ENCODE measurements at regions of chr1 and their contacts with region 1.

Region 1: DNA sequence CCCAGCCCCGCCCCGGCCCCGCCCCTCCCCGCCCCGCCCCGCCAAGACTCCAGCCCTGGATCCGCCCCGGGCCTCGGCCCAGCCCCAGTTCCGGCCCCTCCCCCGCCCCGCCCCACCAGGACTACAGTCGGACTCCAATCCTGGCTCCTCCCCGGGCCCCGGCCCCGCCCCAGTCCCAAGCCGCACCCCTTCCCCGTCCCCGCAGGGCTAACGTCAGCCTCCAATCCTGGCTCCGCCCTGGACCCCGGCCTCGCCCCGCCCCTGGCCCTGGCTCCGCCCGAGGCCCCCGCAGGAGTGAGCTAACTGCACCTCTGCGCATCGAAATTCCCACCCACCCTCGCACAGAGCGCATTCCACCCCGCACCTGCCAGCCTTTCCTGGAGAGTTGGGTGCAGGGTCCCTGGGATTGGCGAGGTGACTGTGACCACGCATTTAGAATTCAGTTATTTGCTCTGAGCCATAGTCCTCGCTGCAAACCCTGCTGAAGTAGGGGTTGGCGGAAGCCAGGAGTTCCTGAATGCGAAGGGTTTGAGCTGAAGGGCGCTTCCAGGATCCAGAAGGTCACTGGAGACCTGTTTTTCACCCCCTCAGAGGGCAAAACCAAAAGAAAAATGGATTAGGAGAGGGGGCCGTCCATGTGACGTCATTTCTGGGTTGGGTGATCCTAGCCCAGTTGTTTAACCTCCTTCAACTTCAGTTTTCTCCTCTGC is 588 bp upstream of the IGSF8 start:
- DNase-seq: peak; percentile 99
- H3K4me3 ChIP-seq: peak overlapping the region; percentile 56 to 90 (median 76)
- H3K27ac ChIP-seq: peak overlapping the region; percentile 91 to 98 (median 95)
- H3K4me1 ChIP-seq: peaks cover 0 to 65% (median 58%) of the 10 kb centered on the region in 4 donors
- H3K27me3 ChIP-seq: no peaks in the 10 kb centered on the region
- CTCF ChIP-seq: no peak
- EP300 ChIP-seq: no peak
- POLR2A ChIP-seq: peak; percentile 67 to 83

Region 2: DNA sequence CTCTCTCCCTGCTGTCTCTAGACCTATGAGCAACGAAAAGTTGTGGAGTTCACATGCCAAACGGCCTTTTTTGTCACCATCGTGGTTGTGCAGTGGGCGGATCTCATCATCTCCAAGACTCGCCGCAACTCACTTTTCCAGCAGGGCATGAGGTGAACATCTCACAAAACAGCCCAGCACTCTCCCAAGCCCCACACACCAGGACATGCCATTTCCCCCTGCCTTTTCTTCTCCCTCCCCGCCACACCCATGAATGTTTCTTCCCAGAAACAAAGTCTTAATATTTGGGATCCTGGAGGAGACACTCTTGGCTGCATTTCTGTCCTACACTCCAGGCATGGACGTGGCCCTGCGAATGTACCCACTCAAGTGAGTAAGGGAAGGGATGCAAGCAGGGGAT is 82.7 kb after region 1 on chr1:
- intact Hi-C with region 1: no loop called
- DNase-seq: no peak
- H3K4me3 ChIP-seq: no peak overlapping the region
- H3K27ac ChIP-seq: no peak overlapping the region
- H3K4me1 ChIP-seq: no peaks in the 10 kb centered on the region
- H3K27me3 ChIP-seq: no peaks in the 10 kb centered on the region
- CTCF ChIP-seq: no peak
- EP300 ChIP-seq: no peak
- POLR2A ChIP-seq: no peak

Region 3: DNA sequence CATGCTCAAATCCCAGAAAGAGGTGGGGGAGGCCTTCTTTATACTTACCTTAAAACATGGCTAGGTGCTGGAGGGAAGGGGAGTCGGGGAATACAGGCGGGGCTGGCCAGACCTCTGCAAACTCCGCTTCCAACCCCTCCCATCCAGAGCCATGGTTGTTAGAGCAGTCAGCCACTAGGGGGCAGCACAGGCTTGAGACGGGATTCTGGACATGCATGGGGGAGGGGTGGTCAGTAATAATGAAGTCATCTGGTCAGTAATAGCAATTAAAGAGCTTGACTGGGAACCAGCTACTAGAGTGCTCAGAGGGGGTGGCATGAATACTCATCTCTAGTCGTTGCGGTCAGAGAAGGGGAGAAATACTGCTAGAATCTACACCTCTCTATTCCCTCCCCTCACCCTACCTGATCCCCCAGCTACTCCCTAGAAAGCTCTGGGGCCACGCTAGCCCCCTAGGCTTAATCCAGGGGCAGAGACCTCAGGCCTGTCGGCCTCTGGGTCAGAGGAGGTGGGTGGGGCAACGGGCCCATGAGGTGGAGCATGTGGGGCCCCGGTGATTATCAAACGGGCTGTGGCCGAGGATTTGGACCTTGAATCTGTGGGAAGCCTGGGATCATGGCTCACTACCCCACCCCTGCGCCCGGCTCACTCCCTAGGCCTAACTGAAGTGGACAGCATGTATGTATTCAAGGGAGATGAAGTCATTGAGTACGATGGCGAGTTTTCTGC is 94.2 kb after region 1 on chr1:
- intact Hi-C with region 1: loop called (anchors 1 kb)
- DNase-seq: peak; percentile 92
- H3K4me3 ChIP-seq: peak overlapping the region in 1 of 4 donors; percentile 14
- H3K27ac ChIP-seq: peak overlapping the region in 2 of 4 donors; percentile 25 to 68
- H3K4me1 ChIP-seq: peaks cover 0 to 37% (median 31%) of the 10 kb centered on the region in 4 donors
- H3K27me3 ChIP-seq: no peaks in the 10 kb centered on the region
- CTCF ChIP-seq: peak; percentile 95 to 99 (median 96)
- EP300 ChIP-seq: no peak
- POLR2A ChIP-seq: no peak

Region 4: GRCh38 chr1:160251687-160252526 is 152.9 kb after region 1 on chr1:
- intact Hi-C with region 1: loop called (anchors 1 kb)
- DNase-seq: peak; percentile 88
- H3K4me3 ChIP-seq: no peak overlapping the region
- H3K27ac ChIP-seq: peak overlapping the region; percentile 33 to 61 (median 47)
- H3K4me1 ChIP-seq: peaks cover 0 to 44% (median 34%) of the 10 kb centered on the region in 4 donors
- H3K27me3 ChIP-seq: no peaks in the 10 kb centered on the region
- CTCF ChIP-seq: peak; percentile 57 to 70 (median 62)
- EP300 ChIP-seq: no peak
- POLR2A ChIP-seq: no peak

Region 5: DNA sequence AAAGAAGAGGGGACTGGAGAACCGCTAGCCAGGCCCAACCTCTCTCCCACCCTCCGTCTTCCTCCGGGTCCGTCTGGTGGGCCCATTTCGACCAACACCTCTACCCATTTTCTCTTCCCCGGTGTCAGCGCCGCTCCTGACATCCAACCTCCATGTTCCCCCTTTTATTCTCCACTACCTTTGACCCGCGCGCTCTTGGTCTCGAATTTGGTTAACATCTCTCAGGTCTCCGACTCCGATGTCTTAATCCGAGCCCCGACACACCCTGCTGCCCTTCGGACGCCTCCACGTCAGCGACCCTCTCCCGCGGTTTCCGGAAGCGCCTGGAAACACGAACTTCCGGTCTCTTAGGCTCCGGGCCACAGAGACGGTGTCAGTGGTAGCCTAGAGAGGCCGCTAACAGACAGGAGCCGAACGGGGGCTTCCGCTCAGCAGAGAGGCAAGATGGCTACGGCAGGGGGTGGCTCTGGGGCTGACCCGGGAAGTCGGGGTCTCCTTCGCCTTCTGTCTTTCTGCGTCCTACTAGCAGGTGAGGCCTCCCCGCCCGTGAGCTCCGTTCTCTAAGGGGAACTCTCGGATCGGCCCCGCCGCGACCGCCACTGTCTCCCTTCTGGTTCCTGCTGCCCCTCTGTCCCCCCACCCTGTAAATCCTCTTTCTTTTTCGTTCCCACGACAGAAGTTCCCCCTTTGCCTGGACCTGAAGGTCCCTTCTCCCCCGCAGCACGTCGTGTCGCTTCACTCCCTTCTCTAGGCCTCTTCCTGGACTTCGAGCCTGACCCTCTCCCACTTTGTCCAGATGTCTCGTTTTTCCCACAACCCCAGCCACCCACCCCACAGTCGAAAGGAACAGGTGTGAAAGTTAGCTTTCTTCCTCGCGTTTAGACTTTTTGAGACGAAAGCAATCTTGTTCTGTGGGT is 244.2 kb after region 1 on chr1 and contains the starts of genes COPA and NCSTN:
- intact Hi-C with region 1: loop called (anchors 5 kb)
- DNase-seq: peak; percentile 96
- H3K4me3 ChIP-seq: peak within 1 kb of the TSS; percentile 68 to 84 (median 75)
- H3K27ac ChIP-seq: peak within 1 kb of the TSS; percentile 78 to 92 (median 89)
- H3K4me1 ChIP-seq: peaks cover 0 to 34% (median 21%) of the 10 kb centered on the region in 4 donors
- H3K27me3 ChIP-seq: no peaks in the 10 kb centered on the region
- CTCF ChIP-seq: no peak
- EP300 ChIP-seq: no peak
- POLR2A ChIP-seq: peak; percentile 84 to 93
- total RNA-seq, gene COPA: 93.8 to 117 (median 96.5) TPM
- total RNA-seq, gene NCSTN: 30.3 to 46.7 (median 39.0) TPM

Region 6: DNA sequence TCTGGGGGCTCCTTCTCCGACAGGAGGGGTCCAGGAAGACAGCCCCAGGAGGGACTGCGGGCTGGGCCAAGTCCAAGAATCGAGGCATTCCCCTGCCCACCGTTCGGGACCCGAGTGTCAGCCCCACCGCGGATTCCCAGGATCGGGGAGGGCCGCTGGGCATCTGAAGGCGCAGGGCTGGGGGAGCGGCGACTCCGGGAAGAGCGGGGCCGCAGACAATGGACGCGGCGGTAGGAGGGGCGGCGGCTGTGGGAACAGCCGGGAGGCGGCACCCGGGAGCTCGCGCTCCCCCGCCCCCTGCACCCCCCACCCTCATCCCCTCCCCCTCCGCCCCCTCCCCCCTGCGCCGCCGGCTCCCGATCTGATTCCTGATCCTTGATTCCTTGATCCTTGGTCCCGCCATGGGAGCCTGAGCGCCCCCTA is 301.2 kb after region 1 on chr1 and contains the start of gene VANGL2:
- intact Hi-C with region 1: loop called (anchors 5 kb)
- DNase-seq: peak; percentile 89
- H3K4me3 ChIP-seq: peak within 1 kb of the TSS; percentile 59 to 82 (median 77)
- H3K27ac ChIP-seq: peak within 1 kb of the TSS; percentile 65 to 83 (median 72)
- H3K4me1 ChIP-seq: peaks cover 0 to 22% (median 13%) of the 10 kb centered on the region in 4 donors
- H3K27me3 ChIP-seq: no peaks in the 10 kb centered on the region
- CTCF ChIP-seq: no peak
- EP300 ChIP-seq: no peak
- POLR2A ChIP-seq: no peak
- total RNA-seq, gene VANGL2: 3.2 to 6.6 (median 3.6) TPM

Measured in sigmoid colon (tissue), 7 donors.